Ascending aorta (tissue), 2 donors: ENCODE measurements at regions of chr11 and their contacts with region 1.

Region 1: DNA sequence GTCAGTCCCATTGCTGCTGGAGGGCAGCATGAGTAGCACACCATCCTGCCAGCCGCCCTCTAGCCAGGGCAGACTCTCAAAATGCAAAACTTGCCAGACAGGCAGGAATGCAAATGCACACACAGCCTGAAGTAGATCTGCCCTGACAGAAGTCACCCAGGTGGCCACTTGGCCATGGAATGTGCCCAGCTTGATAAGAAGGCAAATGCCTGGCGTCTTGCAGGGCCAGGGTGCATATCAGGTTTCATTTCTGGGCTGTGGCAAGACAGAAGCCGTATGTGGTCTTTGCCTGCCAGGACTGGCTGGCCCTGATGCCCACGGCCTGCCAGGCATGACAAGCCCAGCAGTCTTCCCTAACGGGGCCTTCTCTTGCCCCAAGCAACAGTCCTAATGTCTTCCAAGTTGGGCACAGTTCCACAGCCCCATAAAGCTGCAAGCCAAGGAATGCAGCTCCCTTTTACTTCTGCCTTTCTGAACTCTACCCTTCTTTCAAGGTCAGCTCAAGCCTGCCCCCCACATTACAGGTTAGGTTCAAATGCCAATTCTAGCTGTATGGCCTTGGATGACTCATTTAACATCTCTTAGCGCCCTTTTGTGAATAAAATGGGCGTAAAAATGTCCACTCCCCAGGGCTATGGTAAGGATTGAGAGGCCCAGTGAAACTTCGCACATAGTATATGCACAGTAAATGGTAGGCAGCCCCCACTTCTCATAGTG is 29.7 kb downstream of the POU2AF3 start:
- DNase-seq: peak in 1 of 2 donors; percentile 72
- H3K4me3 ChIP-seq: no peak overlapping the region
- H3K27ac ChIP-seq: peak overlapping the region; percentile 89 to 92
- H3K4me1 ChIP-seq: peaks cover 34 to 57% of the 10 kb centered on the region in 2 donors
- H3K27me3 ChIP-seq: no peaks in the 10 kb centered on the region
- CTCF ChIP-seq: no peak

Region 2: DNA sequence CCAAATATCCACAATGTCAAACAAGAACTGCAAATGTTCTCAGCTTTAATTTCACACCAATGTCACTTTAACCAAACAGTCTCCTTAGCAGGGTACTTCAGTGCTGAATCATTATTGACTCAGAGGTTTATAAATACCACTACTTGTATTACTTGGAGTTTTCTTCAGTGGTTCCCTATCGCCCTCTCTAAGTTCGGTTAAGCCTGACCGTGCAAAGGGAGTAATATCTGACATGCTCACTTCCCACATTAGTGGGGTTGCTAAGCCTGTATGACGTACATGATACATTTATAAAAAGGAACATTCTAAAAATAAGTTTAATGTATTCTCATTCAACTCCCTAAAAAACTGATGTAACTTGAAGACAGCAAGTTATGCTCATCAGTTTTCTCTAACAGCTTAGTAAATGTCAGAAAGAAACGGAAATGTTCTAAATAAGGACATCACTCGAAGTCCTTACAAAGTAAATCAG is 1328.0 kb before region 1 on chr11:
- intact Hi-C with region 1: loop called (anchors 5 kb)
- DNase-seq: peak in 1 of 2 donors; percentile 66
- H3K4me3 ChIP-seq: no peak overlapping the region
- H3K27ac ChIP-seq: peak overlapping the region; percentile 10 to 45
- H3K4me1 ChIP-seq: peaks cover 0 to 6% of the 10 kb centered on the region in 2 donors
- H3K27me3 ChIP-seq: no peaks in the 10 kb centered on the region
- CTCF ChIP-seq: no peak

Region 3: GRCh38 chr11:111206472-111206871 is 121.6 kb before region 1 on chr11:
- intact Hi-C with region 1: loop called (anchors 10 kb)
- DNase-seq: no peak
- H3K4me3 ChIP-seq: no peak overlapping the region
- H3K27ac ChIP-seq: peak overlapping the region; percentile 63 to 66
- H3K4me1 ChIP-seq: peaks cover 0 to 11% of the 10 kb centered on the region in 2 donors
- H3K27me3 ChIP-seq: no peaks in the 10 kb centered on the region
- CTCF ChIP-seq: no peak

Region 4: GRCh38 chr11:111299101-111300026 is 28.7 kb before region 1 on chr11:
- intact Hi-C with region 1: loop called (anchors 2 kb)
- DNase-seq: peak in 1 of 2 donors; percentile 78
- H3K4me3 ChIP-seq: peak overlapping the region; percentile 49 to 81
- H3K27ac ChIP-seq: peak overlapping the region; percentile 58 to 87
- H3K4me1 ChIP-seq: peaks cover 0 to 5% of the 10 kb centered on the region in 2 donors
- H3K27me3 ChIP-seq: no peaks in the 10 kb centered on the region
- CTCF ChIP-seq: peak; percentile 71 to 76 (median 75)

Region 5: GRCh38 chr11:111735262-111736116 is 407.4 kb after region 1 on chr11:
- intact Hi-C with region 1: loop called (anchors 10 kb)
- DNase-seq: peak; percentile 47 to 95
- H3K4me3 ChIP-seq: peak overlapping the region; percentile 29 to 55
- H3K27ac ChIP-seq: peak overlapping the region; percentile 91 to 97
- H3K4me1 ChIP-seq: peaks cover 41 to 76% of the 10 kb centered on the region in 2 donors
- H3K27me3 ChIP-seq: no peaks in the 10 kb centered on the region
- CTCF ChIP-seq: no peak